ENCODE measurements at regions of chr2 and their contacts with region 1.

Region 1: DNA sequence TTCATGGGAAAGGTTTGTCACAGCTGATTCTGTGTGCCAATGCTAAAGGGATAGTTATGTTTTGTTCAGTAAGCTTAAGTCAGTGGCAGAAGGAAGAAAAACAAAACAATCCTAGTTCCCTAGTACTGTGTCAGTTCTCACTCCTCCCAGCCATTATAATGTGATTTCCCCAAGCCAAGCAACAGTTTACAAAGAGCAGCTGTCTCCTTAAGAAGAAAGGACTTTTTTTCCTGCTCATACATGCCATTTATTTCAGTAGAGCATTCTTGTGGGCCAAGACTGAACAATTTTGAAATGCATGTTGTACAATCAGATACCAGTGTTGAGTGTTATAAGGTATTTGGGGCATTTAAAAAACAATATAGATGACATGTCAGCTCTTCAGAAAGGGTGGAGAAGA is 52.1 kb downstream of the NEMP2 start:
- DNase-seq: no peak
- ATAC-seq: no peak
- H3K4me3 Mint-ChIP-seq: no peak overlapping the region
- H3K27ac Mint-ChIP-seq: no peak overlapping the region
- H3K4me1 Mint-ChIP-seq: peaks cover 8% of the 10 kb centered on the region
- H3K27me3 Mint-ChIP-seq: no peaks in the 10 kb centered on the region

Region 2: DNA sequence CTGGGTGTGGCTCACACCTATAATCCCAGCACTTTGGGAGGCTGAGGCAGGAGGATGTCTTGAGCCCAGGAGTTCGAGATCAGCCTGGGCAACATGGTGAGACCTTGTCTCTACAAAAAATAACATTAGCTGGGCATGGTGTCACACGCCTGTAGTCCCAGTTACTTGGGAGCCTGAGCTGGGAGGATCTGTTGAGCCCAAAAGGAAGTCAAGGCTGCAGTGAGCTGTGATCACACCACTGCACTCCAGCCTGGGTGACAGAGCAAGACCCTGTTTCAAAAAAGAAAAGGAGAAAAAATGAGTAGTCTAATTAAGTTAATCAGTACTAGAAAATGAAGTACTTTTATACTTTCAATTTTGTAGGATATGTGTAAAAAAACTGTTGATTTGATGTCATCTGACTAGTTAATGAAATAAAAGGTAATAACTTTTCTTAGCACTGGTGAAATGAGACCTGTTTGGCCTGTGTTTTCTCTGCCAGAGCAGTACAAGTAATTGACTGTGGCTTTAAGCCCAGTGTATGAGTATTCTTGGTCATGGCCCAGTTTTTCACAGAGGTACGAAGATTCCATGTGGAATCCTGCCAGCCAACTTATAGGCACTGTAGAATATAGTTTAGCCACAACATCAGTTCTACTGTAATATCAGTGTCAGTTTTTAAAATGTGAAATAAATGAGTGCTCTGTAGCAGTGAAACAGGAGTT is 38.5 kb before region 1 on chr2:
- CTCF ChIA-PET with region 1: no interaction called
- POLR2A ChIA-PET with region 1: no interaction called
- intact Hi-C with region 1: loop called in 1 of 2 experiments (anchors 5 kb)
- DNase-seq: no peak
- ATAC-seq: no peak
- H3K4me3 Mint-ChIP-seq: no peak overlapping the region
- H3K27ac Mint-ChIP-seq: no peak overlapping the region
- H3K4me1 Mint-ChIP-seq: peaks cover 63% of the 10 kb centered on the region
- H3K27me3 Mint-ChIP-seq: no peaks in the 10 kb centered on the region

Measured in activated CD4-positive, alpha-beta T cell treated with anti-CD3 and anti-CD28 coated beads for 36 hours (primary cell).